T-cell (primary cell): ENCODE measurements at regions of chr2 and their contacts with region 1.

Region 1: GRCh38 chr2:172090044-172090961 is 5.0 kb downstream of the DLX1 start:
- DNase-seq: peak in 2 of 35 experiments; percentile 7 to 27
- ATAC-seq: no peak
- H3K4me3 ChIP-seq: no peak overlapping the region
- H3K4me3 Mint-ChIP-seq: no peak overlapping the region
- H3K27ac ChIP-seq: no peak overlapping the region
- H3K27ac Mint-ChIP-seq: no peak overlapping the region
- H3K4me1 ChIP-seq: peaks cover 12 to 65% of the 10 kb centered on the region in 2 experiments
- H3K4me1 Mint-ChIP-seq: peaks cover 45 to 51% (median 47%) of the 10 kb centered on the region in 3 donors
- H3K27me3 ChIP-seq: peaks cover 21 to 93% of the 10 kb centered on the region in 2 experiments
- H3K27me3 Mint-ChIP-seq: peaks cover 81 to 90% of the 10 kb centered on the region in 2 donors

Region 2: GRCh38 chr2:172106108-172106961 is 16.0 kb after region 1 on chr2:
- CTCF ChIA-PET with region 1: interaction called, 9 to 14 read pairs
- POLR2A ChIA-PET with region 1: interaction called in 1 of 2 experiments, 4 read pairs
- DNase-seq: peak in 10 of 35 experiments; percentile 28 to 67 (median 40)
- ATAC-seq: peak; percentile 22 to 37 (median 30)
- H3K4me3 ChIP-seq: peak overlapping the region; percentile 5 to 79
- H3K4me3 Mint-ChIP-seq: peak overlapping the region in 1 of 3 donors; percentile 28
- H3K27ac ChIP-seq: no peak overlapping the region
- H3K27ac Mint-ChIP-seq: no peak overlapping the region
- H3K4me1 ChIP-seq: peaks cover 17 to 66% of the 10 kb centered on the region in 2 experiments
- H3K4me1 Mint-ChIP-seq: peaks cover 51 to 58% (median 54%) of the 10 kb centered on the region in 3 donors
- H3K27me3 ChIP-seq: peaks cover 20 to 83% of the 10 kb centered on the region in 2 experiments
- H3K27me3 Mint-ChIP-seq: peaks cover 62 to 81% of the 10 kb centered on the region in 2 donors